ENCODE measurements at regions of chr6 and their contacts with region 1.

Region 1: GRCh38 chr6:139219271-139219729 is 72.5 kb downstream of the TXLNB start:
- DNase-seq: peak; percentile 81
- ATAC-seq: peak; percentile 99
- H3K4me3 Mint-ChIP-seq: no peak overlapping the region
- H3K27ac Mint-ChIP-seq: peak overlapping the region; percentile 69
- H3K4me1 Mint-ChIP-seq: peaks cover 10% of the 10 kb centered on the region
- H3K27me3 Mint-ChIP-seq: no peaks in the 10 kb centered on the region

Region 2: DNA sequence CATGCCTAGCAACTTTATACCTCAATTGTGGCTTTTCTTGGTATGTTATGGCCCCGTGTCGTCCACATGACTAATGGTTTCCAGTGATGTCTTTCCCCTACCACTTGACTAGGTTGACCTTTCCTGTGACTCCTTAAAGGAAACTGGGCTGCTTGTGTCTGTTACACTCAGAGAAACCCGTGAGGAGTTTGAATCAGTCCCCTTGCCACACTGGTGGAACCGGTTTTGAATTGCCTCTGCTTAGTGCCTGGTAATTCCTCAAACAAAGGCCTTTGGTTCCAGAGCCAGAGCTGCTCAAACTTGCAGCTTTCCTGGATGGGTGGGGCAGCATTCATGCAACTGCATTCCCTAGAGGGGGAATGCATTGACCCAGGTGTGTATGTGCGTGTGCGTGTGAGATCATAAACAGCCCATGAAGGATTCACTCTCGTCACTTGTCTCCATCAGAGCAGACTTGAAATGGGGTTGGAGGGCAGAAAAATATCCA is 401.4 kb before region 1 on chr6:
- CTCF ChIA-PET with region 1: interaction called, 19 read pairs
- POLR2A ChIA-PET with region 1: no interaction called
- DNase-seq: peak; percentile 21
- ATAC-seq: no peak
- H3K4me3 Mint-ChIP-seq: no peak overlapping the region
- H3K27ac Mint-ChIP-seq: no peak overlapping the region
- H3K4me1 Mint-ChIP-seq: peaks cover 24% of the 10 kb centered on the region
- H3K27me3 Mint-ChIP-seq: no peaks in the 10 kb centered on the region

Region 3: GRCh38 chr6:139173172-139173571 is 46.1 kb before region 1 on chr6:
- CTCF ChIA-PET with region 1: interaction called, 14 read pairs
- POLR2A ChIA-PET with region 1: no interaction called
- DNase-seq: peak; percentile 48
- ATAC-seq: peak; percentile 74
- H3K4me3 Mint-ChIP-seq: no peak overlapping the region
- H3K27ac Mint-ChIP-seq: peak overlapping the region; percentile 75
- H3K4me1 Mint-ChIP-seq: peaks cover 85% of the 10 kb centered on the region
- H3K27me3 Mint-ChIP-seq: no peaks in the 10 kb centered on the region

Region 4: DNA sequence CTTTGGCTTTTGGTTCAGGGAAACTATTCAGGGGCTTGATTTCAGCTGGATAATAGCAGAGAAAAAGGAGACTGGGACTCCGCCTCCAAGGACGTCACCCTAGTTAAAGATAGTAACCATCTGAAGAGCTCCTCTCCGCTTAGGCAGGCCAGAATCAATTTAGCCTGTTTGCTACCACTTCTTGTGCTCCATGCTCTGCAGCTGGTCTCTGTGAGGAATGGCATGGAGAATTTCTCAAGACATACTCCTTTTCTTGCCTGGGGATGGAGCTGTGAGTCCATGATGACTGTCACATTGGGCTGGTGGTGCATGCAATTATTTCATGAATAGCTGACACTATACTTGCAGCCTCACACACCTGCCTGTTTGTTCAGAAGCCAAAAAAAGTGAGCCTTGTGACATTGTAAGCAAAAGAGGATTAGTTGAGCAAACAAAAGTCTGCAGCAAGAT is 11.1 kb after region 1 on chr6:
- CTCF ChIA-PET with region 1: interaction called, 23 read pairs
- POLR2A ChIA-PET with region 1: no interaction called
- DNase-seq: no peak
- ATAC-seq: no peak
- H3K4me3 Mint-ChIP-seq: no peak overlapping the region
- H3K27ac Mint-ChIP-seq: no peak overlapping the region
- H3K4me1 Mint-ChIP-seq: no peaks in the 10 kb centered on the region
- H3K27me3 Mint-ChIP-seq: no peaks in the 10 kb centered on the region

Region 5: DNA sequence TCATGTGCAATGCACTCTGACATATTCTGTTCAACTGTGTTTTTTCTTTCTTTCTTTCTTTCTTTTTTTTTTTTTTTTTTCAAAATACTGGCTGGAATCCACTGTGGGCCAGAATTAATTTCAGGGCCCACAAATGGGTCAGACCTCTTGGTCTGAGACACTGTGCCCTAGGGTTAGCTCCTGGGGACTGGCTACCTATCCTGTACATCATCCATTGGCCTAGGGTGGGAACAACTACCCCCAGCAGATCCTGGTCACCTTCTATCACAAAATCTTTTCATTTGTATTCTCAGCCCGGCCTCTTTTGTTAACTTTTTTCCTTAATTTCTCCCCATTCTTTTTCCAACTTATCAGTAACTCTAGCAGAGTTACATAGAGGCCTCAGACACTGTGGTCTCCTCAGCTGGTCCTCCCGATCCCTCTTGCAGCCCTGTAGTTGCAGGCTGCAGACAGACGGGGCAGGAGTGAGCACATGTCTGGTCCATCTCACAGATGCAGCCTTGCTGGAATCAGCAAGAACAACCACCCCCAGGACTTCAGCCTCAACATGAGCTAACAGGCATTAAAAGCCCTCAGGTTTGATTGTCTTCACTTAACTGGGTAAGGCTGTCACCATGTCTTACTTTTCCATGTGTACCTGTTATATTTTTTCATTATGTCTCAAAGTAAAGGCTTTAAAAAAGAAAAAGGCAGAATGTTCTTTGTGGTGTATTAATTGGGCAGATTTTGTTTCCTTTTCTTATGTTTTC is 31.2 kb after region 1 on chr6:
- CTCF ChIA-PET with region 1: interaction called, 25 read pairs
- POLR2A ChIA-PET with region 1: no interaction called
- DNase-seq: peak; percentile 68
- ATAC-seq: peak; percentile 82
- H3K4me3 Mint-ChIP-seq: peak overlapping the region; percentile 2
- H3K27ac Mint-ChIP-seq: peak overlapping the region; percentile 85
- H3K4me1 Mint-ChIP-seq: peaks cover 30% of the 10 kb centered on the region
- H3K27me3 Mint-ChIP-seq: no peaks in the 10 kb centered on the region

Region 6: DNA sequence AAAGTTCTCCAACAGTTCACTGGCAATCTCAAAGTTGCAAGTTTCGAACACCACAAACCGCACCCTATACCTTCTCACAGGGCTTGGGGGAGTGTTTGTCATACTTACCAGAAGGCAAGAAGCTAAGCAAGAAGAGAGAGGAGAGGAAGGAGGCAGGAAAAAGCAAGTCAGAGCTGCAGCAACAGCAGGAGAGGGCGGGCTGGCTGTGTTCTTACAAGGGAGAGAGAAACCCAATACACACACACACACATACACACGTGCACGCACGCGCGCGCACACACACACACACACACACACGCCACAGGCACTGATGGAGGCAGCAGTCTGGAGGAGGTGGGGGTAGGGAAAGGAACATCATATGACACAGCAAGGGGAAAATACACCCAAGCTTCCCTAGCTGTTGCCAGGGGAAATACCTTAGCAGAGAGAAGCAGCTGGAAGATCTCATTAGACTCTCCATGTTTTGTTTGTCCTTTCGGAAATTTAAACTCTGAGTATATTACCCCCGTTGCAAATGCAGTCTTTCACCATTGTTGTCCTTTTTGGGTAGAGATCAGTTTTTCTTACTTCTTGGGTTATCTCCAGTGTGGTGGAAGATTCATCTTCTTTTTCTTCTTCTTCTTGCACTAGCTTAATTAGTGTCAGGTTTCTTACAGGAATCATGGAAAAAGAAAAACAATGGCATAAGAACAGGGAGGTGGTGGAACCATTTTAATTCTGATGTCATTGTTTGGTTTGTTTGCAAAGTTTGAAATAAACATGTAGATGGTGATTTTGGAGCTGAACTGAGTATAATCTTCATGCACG is 72.7 kb after region 1 on chr6 and contains the start of gene TXLNB:
- CTCF ChIA-PET with region 1: interaction called, 36 read pairs
- POLR2A ChIA-PET with region 1: interaction called, 6 read pairs
- DNase-seq: peak; percentile 89
- ATAC-seq: peak; percentile 94
- H3K4me3 Mint-ChIP-seq: peak within 1 kb of the TSS; percentile 68
- H3K27ac Mint-ChIP-seq: peak within 1 kb of the TSS; percentile 98
- H3K4me1 Mint-ChIP-seq: peaks cover 48% of the 10 kb centered on the region
- H3K27me3 Mint-ChIP-seq: no peaks in the 10 kb centered on the region
- total RNA-seq, gene TXLNB: 0.37 to 0.65 TPM

Region 7: GRCh38 chr6:139364302-139364981 is 145.1 kb after region 1 on chr6:
- CTCF ChIA-PET with region 1: interaction called, 177 read pairs
- POLR2A ChIA-PET with region 1: no interaction called
- DNase-seq: no peak
- ATAC-seq: peak; percentile 35
- H3K4me3 Mint-ChIP-seq: no peak overlapping the region
- H3K27ac Mint-ChIP-seq: no peak overlapping the region
- H3K4me1 Mint-ChIP-seq: peaks cover 41% of the 10 kb centered on the region
- H3K27me3 Mint-ChIP-seq: no peaks in the 10 kb centered on the region

Region 8: DNA sequence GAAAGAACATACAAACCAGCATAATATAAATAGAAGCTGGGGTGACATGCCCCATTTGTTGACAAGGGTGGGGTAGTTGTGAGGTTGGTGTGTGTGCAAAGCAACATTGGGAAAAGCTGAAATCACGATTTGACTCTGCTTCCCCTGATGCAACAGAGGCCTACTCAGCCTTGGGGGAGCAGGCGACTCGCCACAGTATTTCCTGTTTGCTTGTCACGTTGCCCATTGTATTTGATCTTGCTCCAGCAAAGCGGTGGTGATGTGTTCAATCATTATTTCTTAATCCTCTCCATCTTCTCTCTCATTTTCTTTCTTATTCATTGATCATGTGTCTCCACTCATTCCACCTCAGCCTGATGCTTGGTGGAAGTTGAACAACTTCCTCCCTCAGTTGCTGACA is 321.0 kb after region 1 on chr6:
- CTCF ChIA-PET with region 1: no interaction called
- POLR2A ChIA-PET with region 1: no interaction called
- DNase-seq: peak; percentile 71
- ATAC-seq: peak; percentile 92
- H3K4me3 Mint-ChIP-seq: peak overlapping the region; percentile 13
- H3K27ac Mint-ChIP-seq: peak overlapping the region; percentile 82
- H3K4me1 Mint-ChIP-seq: peaks cover 35% of the 10 kb centered on the region
- H3K27me3 Mint-ChIP-seq: no peaks in the 10 kb centered on the region